Activated naive CD4-positive, alpha-beta T cell treated with anti-CD3 and anti-CD28 coated beads, Interleukin-2, amount 10 ng/mL, durations not matched to agents 7 days and 5 days (primary cell): ENCODE measurements at regions of chr17 and their contacts with region 1.

Region 1: DNA sequence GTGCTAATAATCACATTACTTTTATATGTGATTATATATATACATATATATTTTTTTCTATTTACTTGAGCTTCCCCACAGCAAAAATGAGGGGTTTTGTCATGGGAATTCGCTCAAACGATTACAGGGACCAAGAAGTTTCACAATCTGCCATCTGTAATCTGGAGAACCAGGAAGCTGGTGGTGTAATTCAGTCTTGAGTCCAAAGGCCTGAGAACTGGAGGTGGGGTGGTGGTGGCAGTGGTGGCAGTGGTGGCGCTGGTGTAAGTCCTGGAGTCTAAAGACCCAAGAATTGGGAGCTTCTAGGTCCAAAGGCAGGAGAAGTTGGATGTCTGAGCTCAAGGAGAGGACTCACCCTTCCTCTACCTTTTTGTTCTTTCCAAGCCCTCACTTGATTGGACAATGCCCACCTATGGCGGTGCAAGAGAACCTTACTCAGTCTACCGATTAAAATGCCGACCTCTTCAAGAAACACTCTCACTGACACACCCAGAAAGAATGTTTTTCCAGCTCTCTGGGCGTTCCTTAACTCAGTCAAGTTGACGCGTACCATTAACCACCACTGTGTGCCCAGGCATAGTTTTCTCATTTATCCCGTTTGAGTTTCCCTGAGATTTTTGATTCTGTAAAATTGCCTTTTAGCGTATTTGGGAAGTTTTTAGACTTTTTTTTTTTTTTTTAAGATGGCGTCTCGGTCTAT is 31.9 kb downstream of the POLR2A start:
- DNase-seq: no peak
- H3K4me3 Mint-ChIP-seq: no peak overlapping the region
- H3K27ac Mint-ChIP-seq: no peak overlapping the region
- H3K4me1 Mint-ChIP-seq: peaks cover 2% of the 10 kb centered on the region
- H3K27me3 Mint-ChIP-seq: no peaks in the 10 kb centered on the region

Region 2: DNA sequence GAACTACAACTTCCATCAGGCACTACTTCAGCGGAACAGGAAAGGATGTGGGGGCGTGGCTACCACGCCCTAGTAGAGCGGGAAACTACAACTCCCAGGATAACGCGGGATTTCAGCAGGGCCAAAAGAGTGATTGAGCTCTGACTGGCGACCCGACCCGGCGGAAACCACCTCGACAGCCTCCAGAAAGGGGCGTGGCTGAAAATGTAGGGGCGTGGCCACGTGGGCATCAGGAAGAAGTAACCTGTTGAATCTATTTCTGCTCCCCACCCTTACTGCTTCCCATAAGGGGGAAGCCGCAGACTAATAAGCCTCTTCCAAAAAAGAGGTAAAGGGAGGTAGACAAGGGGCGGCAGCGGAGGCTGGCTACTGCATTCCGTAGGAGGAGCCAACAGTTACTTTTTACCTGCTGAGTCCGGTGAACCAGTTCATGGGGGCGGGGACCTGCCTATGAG is 80.8 kb before region 1 on chr17 and contains the start of gene TMEM102:
- CTCF ChIA-PET with region 1: interaction called, 12 read pairs
- DNase-seq: peak; percentile 99
- H3K4me3 Mint-ChIP-seq: peak within 1 kb of the TSS; percentile 94
- H3K27ac Mint-ChIP-seq: peak within 1 kb of the TSS; percentile 97
- H3K4me1 Mint-ChIP-seq: peaks cover 44% of the 10 kb centered on the region
- H3K27me3 Mint-ChIP-seq: peaks cover 27% of the 10 kb centered on the region

Region 3: DNA sequence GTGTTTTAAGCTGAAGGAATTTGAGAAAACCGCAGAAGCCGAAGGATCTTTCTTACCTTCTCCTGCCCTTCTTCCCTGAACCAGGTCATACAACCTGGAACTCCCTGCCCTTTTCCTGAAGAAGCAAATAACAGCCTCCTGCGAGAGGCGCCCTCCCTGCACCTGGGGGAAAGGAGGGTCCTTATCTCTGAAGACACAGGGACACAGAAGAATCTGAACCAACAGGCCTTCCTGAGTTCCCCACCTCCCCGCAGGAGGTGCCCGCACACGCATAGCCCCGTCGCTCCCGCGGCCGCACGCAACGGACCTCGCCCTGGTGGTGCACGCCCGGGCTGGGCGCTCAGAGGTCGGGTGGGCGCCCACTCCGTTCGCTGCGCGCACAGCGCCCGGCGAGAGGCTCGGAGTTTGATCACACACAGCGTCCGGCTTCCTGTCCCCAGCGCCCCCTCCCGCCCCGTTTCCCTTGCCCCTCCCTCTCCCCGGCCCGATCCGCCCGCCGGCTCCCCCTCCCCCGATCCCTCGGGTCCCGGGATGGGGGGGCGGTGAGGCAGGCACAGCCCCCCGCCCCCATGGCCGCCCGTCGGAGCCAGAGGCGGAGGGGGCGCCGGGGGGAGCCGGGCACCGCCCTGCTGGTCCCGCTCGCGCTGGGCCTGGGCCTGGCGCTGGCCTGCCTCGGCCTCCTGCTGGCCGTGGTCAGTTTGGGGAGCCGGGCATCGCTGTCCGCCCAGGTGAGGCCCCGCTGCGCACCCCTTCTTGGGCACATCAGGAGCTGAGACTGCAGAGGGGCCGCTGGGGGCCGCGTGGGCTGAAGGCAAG is 32.7 kb after region 1 on chr17 and contains the start of gene TNFSF12:
- CTCF ChIA-PET with region 1: interaction called, 11 read pairs
- DNase-seq: peak; percentile 82
- H3K4me3 Mint-ChIP-seq: peak within 1 kb of the TSS; percentile 93
- H3K27ac Mint-ChIP-seq: peak within 1 kb of the TSS; percentile 90
- H3K4me1 Mint-ChIP-seq: peaks cover 59% of the 10 kb centered on the region
- H3K27me3 Mint-ChIP-seq: no peaks in the 10 kb centered on the region

Region 4: DNA sequence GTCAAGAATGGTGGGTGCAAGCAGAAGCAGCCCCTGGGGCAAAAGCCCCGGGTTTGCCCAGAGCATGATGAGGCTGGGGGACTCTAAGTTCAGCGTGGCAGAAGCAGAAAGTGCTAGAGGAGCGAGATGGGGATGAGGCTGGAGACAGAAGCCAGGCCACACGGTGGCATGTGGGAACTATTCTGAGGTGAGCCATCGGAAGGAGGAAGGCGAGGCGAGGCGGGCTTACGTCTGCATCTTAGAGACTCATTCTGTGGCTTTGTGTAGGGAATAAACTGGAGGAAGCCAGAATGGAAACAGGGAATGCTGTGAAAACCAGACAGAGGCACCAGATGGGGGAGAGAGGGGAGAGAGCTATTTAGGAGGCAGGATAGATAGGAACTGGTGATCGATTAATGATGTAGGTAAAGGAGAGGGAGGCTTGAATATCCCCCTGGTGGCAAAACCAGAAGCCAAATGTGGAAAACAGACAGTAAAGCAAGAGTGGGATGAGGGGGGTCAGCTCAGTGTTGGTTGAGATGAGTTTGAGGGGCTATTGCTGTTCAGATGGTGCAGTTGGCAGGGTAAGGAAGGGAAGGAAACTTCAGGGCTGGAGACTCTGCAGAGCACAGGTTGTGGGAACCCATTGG is 39.4 kb after region 1 on chr17:
- CTCF ChIA-PET with region 1: interaction called, 157 read pairs
- DNase-seq: no peak
- H3K4me3 Mint-ChIP-seq: no peak overlapping the region
- H3K27ac Mint-ChIP-seq: peak overlapping the region; percentile 71
- H3K4me1 Mint-ChIP-seq: peaks cover 89% of the 10 kb centered on the region
- H3K27me3 Mint-ChIP-seq: no peaks in the 10 kb centered on the region

Region 5: GRCh38 chr17:7589204-7589868 is 73.3 kb after region 1 on chr17:
- CTCF ChIA-PET with region 1: interaction called, 22 read pairs
- DNase-seq: peak; percentile 80
- H3K4me3 Mint-ChIP-seq: no peak overlapping the region
- H3K27ac Mint-ChIP-seq: no peak overlapping the region
- H3K4me1 Mint-ChIP-seq: peaks cover 22% of the 10 kb centered on the region
- H3K27me3 Mint-ChIP-seq: no peaks in the 10 kb centered on the region

Region 6: DNA sequence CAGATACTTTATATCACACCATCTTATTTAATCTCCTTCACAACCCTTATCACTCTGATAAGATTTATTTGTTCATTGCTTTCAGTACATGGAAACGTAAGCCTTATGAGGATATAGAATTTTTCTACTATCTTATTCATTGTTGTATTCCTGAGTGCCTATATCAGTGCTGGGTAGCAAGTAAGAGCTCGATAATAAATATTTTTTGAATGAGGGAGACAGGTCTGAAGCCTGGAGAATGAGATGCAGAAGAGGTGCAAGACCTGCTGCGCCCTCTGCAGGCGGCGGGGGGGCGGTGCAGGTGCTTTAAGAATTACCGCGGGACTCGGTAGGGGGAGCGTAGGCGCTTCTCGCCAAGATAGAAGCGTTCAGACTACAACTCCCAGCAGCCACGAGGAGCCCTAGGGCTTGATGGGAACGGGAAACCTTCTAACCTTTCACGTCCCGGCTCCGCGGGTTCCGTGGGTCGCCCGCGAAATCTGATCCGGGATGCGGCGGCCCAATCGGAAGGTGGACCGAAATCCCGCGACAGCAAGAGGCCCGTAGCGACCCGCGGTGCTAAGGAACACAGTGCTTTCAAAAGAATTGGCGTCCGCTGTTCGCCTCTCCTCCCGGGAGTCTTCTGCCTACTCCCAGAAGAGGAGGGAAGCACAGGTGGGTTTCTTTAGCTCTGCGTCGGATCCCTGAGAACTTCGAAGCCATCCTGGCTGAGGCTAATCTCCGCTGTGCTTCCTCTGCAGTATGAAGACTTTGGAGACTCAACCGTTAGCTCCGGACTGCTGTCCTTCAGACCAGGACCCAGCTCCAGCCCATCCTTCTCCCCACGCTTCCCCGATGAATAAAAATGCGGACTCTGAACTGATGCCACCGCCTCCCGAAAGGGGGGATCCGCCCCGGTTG is 172.1 kb after region 1 on chr17 and contains the start of gene WRAP53:
- CTCF ChIA-PET with region 1: interaction called, 19 read pairs
- DNase-seq: peak; percentile 97
- H3K4me3 Mint-ChIP-seq: peak within 1 kb of the TSS; percentile 93
- H3K27ac Mint-ChIP-seq: peak within 1 kb of the TSS; percentile 98
- H3K4me1 Mint-ChIP-seq: peaks cover 42% of the 10 kb centered on the region
- H3K27me3 Mint-ChIP-seq: peaks cover 5% of the 10 kb centered on the region